MCF 10A (cell line): ENCODE measurements at regions of chr5 and their contacts with region 1.

Region 1: DNA sequence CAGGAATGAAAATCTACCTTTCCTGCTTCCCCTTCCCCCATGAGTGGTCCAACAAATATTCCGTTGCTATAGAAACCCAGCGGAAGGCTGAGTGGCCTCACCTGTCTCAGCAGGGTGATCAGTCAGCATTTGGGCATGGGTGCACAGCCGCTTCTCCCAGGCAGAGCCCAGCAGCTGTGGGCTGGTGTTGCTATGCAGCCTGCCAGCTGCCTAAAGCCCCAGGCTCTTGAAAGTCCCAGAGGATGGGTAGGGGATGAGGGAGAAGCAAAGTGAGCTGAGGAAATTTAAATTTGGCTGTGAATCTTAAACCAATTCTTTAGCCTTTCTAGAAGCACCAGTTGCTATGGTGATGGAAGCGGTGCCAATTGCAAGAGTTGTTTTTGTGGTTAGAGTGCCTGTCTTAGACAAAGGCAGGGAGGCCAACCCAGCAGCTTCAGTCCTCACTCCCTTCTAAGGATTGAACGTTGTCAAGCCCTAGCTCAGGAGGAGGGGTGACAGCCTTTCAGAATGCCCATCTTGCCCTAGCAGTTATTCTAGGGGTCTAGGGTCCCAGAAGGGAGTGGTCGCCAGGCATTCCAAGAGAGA is 151.5 kb upstream of the PITX1 start:
- DNase-seq: peak; percentile 40
- H3K4me3 Mint-ChIP-seq: no peak overlapping the region
- H3K27ac Mint-ChIP-seq: no peak overlapping the region
- H3K4me1 Mint-ChIP-seq: no peaks in the 10 kb centered on the region
- H3K27me3 Mint-ChIP-seq: no peaks in the 10 kb centered on the region
- CTCF ChIP-seq: no peak

Region 2: DNA sequence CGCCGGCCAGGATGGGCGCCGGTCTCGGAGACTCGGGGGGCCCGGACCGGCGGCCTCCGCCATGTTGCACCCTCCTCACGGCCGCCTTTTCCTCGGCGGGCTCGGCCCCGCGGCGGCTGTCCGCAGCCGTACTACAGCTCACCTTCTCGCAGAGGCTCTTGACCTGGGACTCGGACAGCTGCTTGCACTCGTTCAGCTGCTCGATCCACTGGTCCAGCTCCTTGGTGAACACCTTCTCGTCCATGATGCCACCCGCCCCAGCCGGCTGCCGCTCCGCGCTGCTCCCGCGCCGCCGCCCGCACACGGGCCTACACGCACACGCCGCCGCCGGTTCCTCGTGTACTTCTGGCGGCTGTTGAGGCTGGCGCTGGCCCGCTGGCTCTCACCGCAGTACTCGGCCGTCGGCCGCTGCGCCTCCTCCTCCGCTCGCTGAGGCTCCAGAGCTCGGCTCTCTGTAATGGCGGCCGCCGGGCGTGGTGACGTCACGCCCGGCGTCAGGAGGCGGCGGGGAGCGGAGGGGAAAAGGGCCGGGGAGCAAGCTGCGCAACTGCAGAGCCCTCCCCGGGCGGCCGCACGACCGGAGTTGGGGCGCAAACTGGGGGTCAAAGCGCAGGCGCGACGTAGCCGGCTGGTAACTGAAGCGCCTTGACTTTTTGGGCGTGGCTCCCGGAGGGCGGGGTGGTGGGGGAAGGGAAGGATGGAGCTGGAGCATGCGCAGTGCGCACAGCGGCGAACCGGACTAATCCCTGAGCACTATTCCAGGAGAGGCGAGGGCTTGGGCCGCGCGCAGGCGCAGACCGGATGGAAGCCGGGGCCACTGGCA is 959.7 kb before region 1 on chr5 and contains the start of gene PPP2CA:
- CTCF ChIA-PET with region 1: no interaction called
- POLR2A ChIA-PET with region 1: no interaction called
- intact Hi-C with region 1: no loop called
- DNase-seq: peak; percentile 99
- H3K4me3 Mint-ChIP-seq: peak within 1 kb of the TSS; percentile 97
- H3K27ac Mint-ChIP-seq: peak within 1 kb of the TSS; percentile 100
- H3K4me1 Mint-ChIP-seq: peaks cover 34% of the 10 kb centered on the region
- H3K27me3 Mint-ChIP-seq: no peaks in the 10 kb centered on the region
- CTCF ChIP-seq: no peak
- total RNA-seq, gene PPP2CA: 317 and 359 TPM in 2 replicates

Region 3: DNA sequence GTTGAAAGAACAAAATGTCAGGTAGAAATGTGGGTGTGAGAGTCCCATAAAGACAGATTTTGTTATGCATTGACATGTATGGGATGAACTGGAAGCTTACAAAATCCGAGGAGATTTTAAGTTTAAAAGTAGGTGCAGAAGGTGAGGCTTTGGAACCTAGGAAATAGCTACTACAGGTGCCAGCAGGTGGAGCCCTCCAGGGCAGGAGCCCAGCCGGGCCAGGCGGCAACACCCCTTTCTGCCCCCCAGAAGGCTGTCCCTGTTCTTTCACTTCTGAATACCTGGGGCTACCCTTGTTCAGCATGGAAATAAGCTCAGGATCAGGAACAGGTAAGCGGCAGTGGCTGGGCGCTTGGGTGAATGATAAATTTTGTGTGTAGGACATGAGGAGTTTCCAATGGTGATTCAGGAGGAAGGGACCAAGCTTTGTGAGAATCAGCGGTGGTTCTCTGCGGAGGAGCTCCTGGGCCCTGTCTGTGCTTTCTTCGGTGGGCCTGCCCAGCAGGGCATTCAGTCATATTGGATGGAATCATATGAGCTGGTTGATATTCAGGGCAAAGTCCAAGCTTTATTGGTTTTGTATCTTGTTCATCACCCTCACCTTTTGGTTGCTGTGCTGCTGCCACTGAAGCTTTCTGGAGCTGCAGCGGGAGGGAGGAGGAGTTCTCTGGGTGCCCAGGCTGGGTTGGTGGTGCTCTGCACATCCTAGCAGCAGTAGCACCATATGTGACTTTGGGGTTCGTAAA is 268.3 kb before region 1 on chr5:
- CTCF ChIA-PET with region 1: interaction called, 53 read pairs
- POLR2A ChIA-PET with region 1: interaction called, 3 read pairs
- intact Hi-C with region 1: no loop called
- DNase-seq: no peak
- H3K4me3 Mint-ChIP-seq: no peak overlapping the region
- H3K27ac Mint-ChIP-seq: no peak overlapping the region
- H3K4me1 Mint-ChIP-seq: no peaks in the 10 kb centered on the region
- H3K27me3 Mint-ChIP-seq: no peaks in the 10 kb centered on the region
- CTCF ChIP-seq: peak; percentile 33

Region 4: GRCh38 chr5:135059000-135059923 is 126.3 kb before region 1 on chr5:
- CTCF ChIA-PET with region 1: no interaction called
- POLR2A ChIA-PET with region 1: no interaction called
- intact Hi-C with region 1: loop called (anchors 1 kb)
- DNase-seq: peak; percentile 25
- H3K4me3 Mint-ChIP-seq: no peak overlapping the region
- H3K27ac Mint-ChIP-seq: no peak overlapping the region
- H3K4me1 Mint-ChIP-seq: no peaks in the 10 kb centered on the region
- H3K27me3 Mint-ChIP-seq: no peaks in the 10 kb centered on the region
- CTCF ChIP-seq: peak; percentile 26

Region 5: GRCh38 chr5:135127505-135128239 is 57.9 kb before region 1 on chr5:
- CTCF ChIA-PET with region 1: interaction called, 4 read pairs
- POLR2A ChIA-PET with region 1: no interaction called
- intact Hi-C with region 1: loop called (anchors 5 kb)
- DNase-seq: peak; percentile 98
- H3K4me3 Mint-ChIP-seq: no peak overlapping the region
- H3K27ac Mint-ChIP-seq: peak overlapping the region; percentile 49
- H3K4me1 Mint-ChIP-seq: peaks cover 36% of the 10 kb centered on the region
- H3K27me3 Mint-ChIP-seq: no peaks in the 10 kb centered on the region
- CTCF ChIP-seq: no peak

Region 6: DNA sequence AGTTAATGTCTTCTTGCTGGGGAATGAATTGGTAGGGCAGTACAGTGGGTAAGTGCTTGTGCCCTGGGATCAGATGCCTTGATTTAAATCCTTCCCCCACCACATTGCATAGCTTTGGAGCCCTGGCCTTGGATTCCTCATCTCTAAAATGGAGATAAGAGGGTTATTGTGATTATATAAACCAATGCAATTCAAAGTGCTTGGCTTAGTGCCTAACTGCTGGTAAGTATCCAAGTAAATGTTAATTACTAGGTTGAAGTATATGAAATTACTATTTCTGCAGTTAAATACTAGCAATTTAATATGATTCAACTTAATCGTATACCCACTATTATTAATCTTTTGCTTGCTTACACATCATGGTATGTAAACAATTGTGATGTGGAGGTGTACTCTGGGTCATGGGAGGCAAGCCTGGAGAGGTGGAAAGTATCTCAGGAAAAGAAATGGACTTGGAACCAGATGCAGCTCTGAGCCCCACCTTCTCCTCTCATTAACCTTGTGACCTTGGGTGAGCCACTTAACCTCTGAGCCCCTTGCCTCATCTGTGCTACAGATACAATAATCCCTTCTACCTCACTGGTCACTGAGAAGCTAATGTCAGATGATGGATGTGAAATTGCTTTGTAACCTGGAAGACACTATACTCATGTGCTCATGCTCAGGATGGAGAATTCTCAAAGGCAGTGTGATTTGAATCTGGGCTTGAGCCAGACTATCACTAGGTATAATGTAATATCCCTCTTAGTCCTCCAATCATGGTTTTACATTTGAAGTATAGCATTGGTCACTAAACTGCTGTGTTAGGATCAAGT is 326.4 kb after region 1 on chr5:
- CTCF ChIA-PET with region 1: no interaction called
- POLR2A ChIA-PET with region 1: no interaction called
- intact Hi-C with region 1: no loop called
- DNase-seq: no peak
- H3K4me3 Mint-ChIP-seq: no peak overlapping the region
- H3K27ac Mint-ChIP-seq: no peak overlapping the region
- H3K4me1 Mint-ChIP-seq: no peaks in the 10 kb centered on the region
- H3K27me3 Mint-ChIP-seq: no peaks in the 10 kb centered on the region
- CTCF ChIP-seq: no peak